Mammary epithelial cell (primary cell): ENCODE measurements at regions of chr16 and their contacts with region 1.

Region 1: DNA sequence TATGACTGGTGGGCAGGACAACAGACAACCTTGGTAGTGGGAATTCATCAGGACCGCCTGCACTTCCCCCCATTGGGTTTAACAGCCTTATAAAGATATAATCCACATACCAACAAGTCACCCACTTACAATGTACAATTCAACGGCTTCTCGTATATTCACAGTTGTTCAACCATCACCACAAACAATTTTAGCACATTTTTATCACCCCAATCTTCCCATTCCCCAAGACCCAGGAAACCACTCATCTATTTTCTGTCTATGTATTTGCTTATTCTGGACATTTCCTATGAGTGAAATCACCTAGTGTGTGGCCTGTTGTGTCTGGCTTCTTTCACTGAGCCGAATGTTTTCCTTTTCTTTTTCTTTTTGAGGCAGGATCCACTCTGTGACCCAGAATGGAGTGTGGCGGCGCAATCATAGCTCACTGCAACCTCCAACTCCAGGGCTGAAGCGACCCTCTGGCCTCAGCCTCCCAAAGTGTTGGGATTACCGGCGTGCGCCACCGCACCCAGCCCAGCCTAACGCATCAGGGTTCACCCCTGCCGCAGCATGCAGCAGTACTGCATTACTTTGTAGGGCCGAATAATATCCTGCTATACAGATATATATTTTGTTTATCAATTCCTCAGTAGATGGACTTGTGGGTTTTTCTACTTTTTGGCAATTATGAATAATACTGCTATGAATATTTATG is 10.9 kb downstream of the ANKS3 start:
- DNase-seq: no peak
- H3K4me3 ChIP-seq: no peak overlapping the region
- H3K27ac ChIP-seq: no peak overlapping the region
- H3K4me1 ChIP-seq: no peaks in the 10 kb centered on the region
- H3K27me3 ChIP-seq: no peaks in the 10 kb centered on the region
- CTCF ChIP-seq: no peak

Region 2: DNA sequence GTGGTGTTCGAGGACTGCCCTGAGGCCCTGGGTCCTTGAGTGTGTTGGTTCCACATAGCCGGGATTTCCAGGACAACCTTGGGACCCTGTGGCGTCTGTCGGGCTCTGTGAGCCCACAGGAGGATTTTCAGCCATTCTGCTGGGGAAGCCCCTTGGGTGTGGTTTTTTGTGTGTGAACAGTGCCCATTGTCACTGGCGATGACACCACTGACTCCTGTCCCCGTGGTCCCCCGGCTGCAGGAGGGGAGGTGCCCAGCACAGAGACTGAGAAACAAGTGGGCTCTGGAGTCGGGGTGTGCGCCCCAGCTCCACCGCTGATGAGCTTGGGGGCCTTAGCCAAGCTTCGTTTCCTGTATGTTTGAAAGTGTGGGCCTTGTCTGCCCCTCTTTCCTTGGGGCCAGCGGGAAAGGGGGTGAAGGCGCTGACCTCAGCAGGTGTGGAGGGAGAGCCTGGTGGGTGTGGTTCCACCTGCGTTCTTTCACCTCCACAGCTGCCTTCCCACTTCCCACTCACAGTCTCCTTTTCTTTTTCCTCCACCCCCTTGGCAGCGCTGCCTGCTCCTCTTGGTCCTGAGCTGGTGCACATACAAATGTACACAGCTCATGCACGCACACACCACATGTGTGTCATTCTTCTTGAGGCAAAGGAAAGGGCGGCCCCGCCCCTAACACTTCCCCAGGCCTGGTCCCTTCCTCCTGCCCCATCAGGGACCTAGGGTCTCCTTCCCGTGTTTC is 82.5 kb before region 1 on chr16:
- CTCF ChIA-PET with region 1: no interaction called
- dilution Hi-C with region 1: loop called (anchors 10 kb)
- in situ Hi-C with region 1: no loop called
- intact Hi-C with region 1: no loop called
- DNase-seq: no peak
- H3K4me3 ChIP-seq: no peak overlapping the region
- H3K27ac ChIP-seq: no peak overlapping the region
- H3K4me1 ChIP-seq: no peaks in the 10 kb centered on the region
- H3K27me3 ChIP-seq: no peaks in the 10 kb centered on the region
- CTCF ChIP-seq: no peak

Region 3: DNA sequence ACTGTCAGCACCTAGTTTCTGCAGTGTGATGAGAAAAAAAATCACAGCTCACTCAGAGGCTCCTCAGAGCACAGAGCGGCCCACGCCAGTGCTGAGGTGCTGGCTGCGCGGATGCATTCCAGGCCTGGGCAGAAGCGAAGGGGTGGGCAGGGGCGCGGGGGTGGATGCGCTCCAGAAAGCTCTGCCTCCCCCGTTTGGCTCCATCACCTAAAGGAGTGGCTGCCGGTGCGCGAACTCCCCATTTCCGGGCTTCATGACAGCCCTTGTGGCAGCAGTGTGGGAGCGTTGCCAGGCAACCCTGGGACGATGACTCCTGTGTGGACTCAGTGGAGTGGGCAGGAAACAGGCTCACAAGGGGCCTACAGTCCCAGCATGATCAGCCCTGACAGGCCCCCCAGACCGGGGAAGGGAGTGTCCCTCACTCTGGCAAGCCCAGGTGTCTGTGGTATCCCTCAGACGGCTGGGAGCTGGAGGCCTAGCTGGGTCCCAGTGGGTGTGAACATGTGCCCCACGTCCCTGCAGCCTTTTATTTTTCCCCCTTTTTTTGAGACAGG is 62.7 kb before region 1 on chr16:
- CTCF ChIA-PET with region 1: no interaction called
- dilution Hi-C with region 1: loop called (anchors 5 kb)
- in situ Hi-C with region 1: no loop called
- intact Hi-C with region 1: no loop called
- DNase-seq: peak; percentile 70
- H3K4me3 ChIP-seq: no peak overlapping the region
- H3K27ac ChIP-seq: peak overlapping the region; percentile 44
- H3K4me1 ChIP-seq: peaks cover 51% of the 10 kb centered on the region
- H3K27me3 ChIP-seq: no peaks in the 10 kb centered on the region
- CTCF ChIP-seq: no peak

Region 4: GRCh38 chr16:4802659-4803287 is 79.6 kb after region 1 on chr16:
- CTCF ChIA-PET with region 1: no interaction called
- dilution Hi-C with region 1: loop called (anchors 10 kb)
- in situ Hi-C with region 1: no loop called
- intact Hi-C with region 1: no loop called
- DNase-seq: peak; percentile 90
- H3K4me3 ChIP-seq: peak overlapping the region; percentile 73 to 80 (median 77)
- H3K27ac ChIP-seq: peak overlapping the region; percentile 53
- H3K4me1 ChIP-seq: peaks cover 26% of the 10 kb centered on the region
- H3K27me3 ChIP-seq: no peaks in the 10 kb centered on the region
- CTCF ChIP-seq: no peak

Region 5: DNA sequence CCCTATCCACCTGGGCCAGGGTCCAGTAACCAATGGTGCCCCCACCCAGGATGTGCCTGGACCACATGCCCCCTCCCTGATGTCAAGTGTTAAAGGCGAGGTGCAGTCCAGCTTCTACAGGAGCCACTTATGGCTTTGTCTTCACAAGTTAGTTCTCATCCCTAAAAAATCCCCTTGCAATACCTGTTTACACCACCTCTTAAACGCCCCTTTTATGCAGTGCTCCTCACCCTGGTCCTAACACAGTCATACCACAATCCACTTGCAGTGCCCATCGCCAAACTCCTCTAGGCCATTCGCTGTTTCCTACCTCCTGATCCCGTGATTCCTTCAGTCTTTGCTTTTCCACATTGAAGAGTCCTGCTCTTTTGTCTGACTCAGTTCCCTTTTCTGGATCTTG is 116.7 kb after region 1 on chr16:
- CTCF ChIA-PET with region 1: no interaction called
- dilution Hi-C with region 1: loop called (anchors 5 kb)
- in situ Hi-C with region 1: no loop called
- intact Hi-C with region 1: no loop called
- DNase-seq: no peak
- H3K4me3 ChIP-seq: no peak overlapping the region
- H3K27ac ChIP-seq: no peak overlapping the region
- H3K4me1 ChIP-seq: no peaks in the 10 kb centered on the region
- H3K27me3 ChIP-seq: no peaks in the 10 kb centered on the region
- CTCF ChIP-seq: no peak

Region 6: GRCh38 chr16:4859900-4860255 is 136.7 kb after region 1 on chr16:
- CTCF ChIA-PET with region 1: no interaction called
- dilution Hi-C with region 1: loop called (anchors 5 kb)
- in situ Hi-C with region 1: no loop called
- intact Hi-C with region 1: no loop called
- DNase-seq: peak; percentile 76
- H3K4me3 ChIP-seq: no peak overlapping the region
- H3K27ac ChIP-seq: peak overlapping the region; percentile 74
- H3K4me1 ChIP-seq: peaks cover 37% of the 10 kb centered on the region
- H3K27me3 ChIP-seq: no peaks in the 10 kb centered on the region
- CTCF ChIP-seq: no peak